GM10248 (cell line): ENCODE measurements at regions of chr16 and their contacts with region 1.

Region 1: DNA sequence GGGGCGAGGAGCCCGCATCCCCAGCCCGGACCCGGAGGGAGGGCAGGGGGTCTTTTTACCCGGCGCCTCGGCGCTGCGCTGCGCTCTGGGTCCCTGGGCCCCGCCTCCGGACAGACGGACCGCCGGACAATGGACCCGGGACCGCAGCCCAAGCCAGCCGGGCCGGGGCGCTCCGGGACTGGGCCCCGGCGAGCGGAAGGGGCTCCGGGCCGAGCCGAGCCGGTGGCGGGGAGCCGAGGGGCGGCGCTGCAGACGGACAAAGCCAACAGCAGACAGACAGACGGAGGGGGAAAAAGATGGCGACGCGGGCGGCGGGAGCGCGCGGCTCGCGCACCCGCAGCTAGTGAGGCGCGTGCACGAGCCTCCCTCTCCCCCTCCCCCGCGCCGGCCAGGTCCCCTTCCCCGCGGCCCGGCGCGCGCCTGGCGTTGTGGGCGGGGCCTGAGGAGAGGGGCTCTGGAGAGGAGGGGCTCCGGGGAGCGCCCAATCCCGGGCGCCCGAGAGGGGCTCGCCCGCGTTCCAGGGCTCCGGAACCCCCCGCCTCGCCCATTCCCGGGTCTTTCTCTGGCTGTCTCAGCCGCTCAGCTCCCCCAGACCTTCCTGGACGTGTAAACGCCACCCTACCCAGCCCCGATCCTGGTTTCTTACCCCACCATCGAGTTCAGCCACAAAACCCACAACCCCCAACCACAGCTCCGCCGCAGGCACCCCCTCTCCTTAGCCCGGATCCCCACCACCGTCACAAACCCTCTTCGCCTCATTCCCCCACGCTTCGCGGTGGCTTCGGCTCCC is at the start of gene ZNF821:
- DNase-seq: peak; percentile 86
- CTCF ChIP-seq: no peak

Region 2: GRCh38 chr16:71830359-71830758 is 53.7 kb before region 1 on chr16:
- CTCF ChIA-PET with region 1: interaction called, 10 read pairs
- POLR2A ChIA-PET with region 1: no interaction called
- DNase-seq: no peak
- CTCF ChIP-seq: no peak

Region 3: GRCh38 chr16:71853413-71853812 is 30.6 kb before region 1 on chr16:
- CTCF ChIA-PET with region 1: interaction called, 67 read pairs
- POLR2A ChIA-PET with region 1: no interaction called
- DNase-seq: peak; percentile 59
- CTCF ChIP-seq: no peak

Region 4: DNA sequence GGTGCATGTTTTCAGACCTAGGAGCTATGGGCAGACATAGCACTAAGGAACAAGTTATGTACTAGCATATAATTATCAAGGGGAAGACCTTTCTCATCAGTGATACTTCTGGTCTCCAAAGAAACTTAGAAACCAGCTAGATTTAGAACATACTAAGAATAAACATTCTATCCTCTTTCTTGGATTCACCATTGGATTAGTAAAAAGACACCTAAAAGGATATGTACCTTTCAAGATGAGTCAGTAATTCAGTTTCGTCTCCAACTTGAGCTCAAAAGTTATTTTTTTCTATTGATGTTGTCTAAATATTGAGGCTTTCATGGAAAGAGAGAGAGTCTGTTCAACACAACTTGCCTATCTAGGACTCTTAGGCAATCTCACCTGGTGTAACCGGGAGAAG is 13.2 kb before region 1 on chr16:
- CTCF ChIA-PET with region 1: interaction called, 91 read pairs
- POLR2A ChIA-PET with region 1: no interaction called
- DNase-seq: no peak
- CTCF ChIP-seq: no peak

Region 5: DNA sequence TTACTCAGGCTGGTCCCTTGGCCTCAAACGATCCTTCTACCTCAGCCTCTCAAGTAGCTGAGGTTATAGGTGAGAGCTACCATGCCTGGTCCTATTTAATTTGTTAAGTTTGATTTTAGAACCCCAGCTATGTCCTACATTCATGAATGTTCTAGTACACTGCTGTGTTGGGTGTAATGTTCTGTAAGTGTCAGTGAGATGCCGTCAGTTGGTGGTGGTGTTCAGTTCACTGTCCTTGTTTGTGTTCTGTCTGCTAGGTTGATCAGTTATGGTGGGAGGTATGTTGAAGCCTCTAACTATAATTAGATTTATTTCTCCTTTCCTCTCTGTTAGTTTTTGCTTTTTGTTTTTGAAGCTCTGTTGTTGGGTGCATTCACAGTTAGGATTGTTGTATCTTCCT is 19.6 kb after region 1 on chr16:
- CTCF ChIA-PET with region 1: interaction called, 58 read pairs
- POLR2A ChIA-PET with region 1: interaction called, 5 read pairs
- DNase-seq: no peak
- CTCF ChIP-seq: no peak

Region 6: DNA sequence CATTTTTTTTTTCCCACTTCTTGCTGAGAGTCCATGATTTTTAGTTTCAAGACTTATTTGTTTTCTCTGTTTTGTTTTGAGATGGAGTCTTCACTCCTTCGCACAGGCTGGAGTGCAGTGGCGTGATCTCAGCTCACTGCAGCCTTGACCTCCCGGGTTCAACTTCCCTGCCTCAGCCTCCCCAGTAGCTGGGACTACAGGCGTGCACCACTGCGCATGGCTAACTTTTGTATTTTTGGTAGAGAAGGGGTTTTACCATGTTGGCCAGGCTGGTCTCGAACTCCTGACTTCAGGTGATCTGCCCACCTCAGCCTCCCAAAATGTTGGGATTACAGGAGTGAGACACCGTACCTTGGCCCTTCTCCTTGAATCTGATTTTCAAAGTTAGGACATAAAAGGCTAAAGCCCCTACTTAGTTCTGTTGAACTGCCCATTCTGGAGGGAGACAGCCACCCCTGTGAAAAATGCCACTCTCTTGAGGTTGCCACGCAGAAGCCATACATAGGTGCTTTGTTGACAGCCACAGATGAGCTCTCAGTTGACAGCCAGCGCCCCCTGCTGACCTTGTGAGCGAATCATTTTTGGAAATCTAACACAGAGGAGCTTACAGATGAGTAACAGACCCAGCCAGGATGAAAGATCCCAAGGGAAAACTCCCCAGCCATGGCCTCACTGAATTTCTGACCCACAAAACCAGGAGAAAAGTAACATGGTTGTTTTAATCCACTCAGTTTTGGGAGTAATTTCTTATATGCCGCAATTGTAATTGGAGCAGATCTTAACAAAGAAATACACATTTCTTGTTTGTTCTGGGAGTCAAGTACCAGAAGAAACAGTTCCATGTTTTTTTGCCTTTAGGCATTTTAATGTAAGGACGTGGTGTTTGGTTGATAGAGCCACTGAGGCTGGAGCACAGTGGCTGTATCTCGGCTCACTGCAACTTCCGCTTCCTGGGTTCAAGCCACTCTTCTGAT is 77.3 kb after region 1 on chr16:
- CTCF ChIA-PET with region 1: interaction called, 13 read pairs
- POLR2A ChIA-PET with region 1: no interaction called
- DNase-seq: peak; percentile 73
- CTCF ChIP-seq: peak; percentile 86

Region 7: GRCh38 chr16:72285728-72286127 is 401.7 kb after region 1 on chr16:
- CTCF ChIA-PET with region 1: no interaction called
- POLR2A ChIA-PET with region 1: no interaction called
- DNase-seq: no peak
- CTCF ChIP-seq: no peak